Lower leg skin (tissue), 4 donors: ENCODE measurements at regions of chr2 and their contacts with region 1.

Region 1: GRCh38 chr2:70871398-70872211 is 36.0 kb upstream of the CD207 start:
- DNase-seq: peak; percentile 70 to 97
- H3K4me3 ChIP-seq: no peak overlapping the region
- CTCF ChIP-seq: peak in 1 of 3 donors; percentile 26
- POLR2A ChIP-seq: no peak

Region 2: DNA sequence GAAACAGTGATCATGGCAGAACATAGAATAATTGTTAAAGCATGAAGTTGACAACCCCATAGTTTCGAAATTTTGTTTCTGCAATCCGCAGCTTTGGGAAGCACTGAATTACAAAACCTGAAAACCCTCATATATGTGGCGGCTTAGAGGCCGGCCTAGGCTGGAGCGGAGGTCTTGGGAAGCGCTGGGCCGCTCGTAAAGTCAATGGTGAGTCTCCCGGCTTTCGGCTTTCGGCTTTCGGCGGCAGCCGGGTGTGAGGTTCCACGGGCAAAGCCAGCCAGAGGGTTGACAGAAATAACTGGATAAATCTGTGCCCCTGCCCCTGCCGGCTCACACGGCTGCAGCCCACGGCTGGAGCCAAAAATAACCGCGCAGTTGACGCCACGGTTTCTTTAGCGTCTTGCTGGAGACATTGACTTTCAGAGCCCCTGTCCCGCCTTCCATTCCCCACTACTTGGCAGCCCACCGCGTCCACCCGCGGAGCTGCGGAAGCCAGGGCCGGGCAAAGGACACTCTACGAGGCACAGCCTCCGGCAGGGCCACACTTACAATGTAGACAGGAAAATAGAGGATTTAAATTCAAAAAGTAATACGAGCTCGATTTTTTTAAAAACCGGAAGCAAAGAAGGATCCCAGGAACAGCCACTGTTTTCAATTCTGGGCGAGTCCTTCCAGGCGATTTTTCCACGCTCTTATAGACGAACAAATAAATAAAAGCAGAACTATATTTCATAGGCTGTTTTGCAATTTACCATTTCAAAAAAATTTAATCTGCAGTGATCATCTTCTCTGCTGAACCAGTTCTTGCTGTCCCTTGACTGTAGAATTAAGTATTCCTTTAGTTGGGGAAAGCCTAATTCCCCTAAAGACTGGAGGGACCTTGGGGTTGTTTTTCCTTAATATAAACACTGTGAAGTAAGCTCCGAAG is 35.8 kb after region 1 on chr2:
- intact Hi-C with region 1: no loop called
- DNase-seq: peak in 1 of 2 donors; percentile 76
- H3K4me3 ChIP-seq: no peak overlapping the region
- CTCF ChIP-seq: no peak
- POLR2A ChIP-seq: no peak

Region 3: DNA sequence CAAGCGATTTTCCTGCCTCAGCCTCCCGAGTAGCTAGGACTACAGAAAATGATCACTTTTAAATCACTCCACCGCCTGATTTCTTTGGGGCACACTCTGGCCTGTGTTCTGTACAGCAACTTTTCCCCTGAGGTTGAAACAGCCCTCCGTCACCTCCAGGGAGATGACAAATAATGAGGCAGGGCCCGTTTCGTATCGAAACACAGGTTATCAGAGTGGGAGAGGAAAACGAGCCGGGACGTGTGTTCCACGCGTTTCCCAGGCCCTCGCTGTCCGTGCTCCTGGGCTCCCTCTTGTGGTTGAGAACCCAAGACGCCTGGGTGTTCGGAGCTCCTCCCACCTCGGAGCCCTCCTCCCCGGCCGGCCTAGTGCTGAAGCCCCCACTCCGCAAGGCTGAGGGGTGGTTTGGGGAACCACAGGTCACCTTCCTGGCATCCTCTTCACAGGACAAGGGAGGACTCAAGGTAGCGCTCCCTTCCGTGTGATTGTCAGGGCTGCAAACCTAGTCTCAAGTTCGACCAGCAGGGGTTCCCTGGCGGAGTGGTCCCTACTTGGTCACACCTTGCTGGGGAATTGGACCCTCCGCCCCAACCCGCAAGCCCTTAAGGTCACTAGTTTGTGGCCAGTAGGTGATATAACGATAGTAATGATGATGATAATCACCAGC is 76.9 kb after region 1 on chr2:
- intact Hi-C with region 1: loop called (anchors 5 kb)
- DNase-seq: peak; percentile 69 to 95
- H3K4me3 ChIP-seq: no peak overlapping the region
- CTCF ChIP-seq: peak in 1 of 3 donors; percentile 68
- POLR2A ChIP-seq: no peak